Calu3 (cell line): ENCODE measurements at regions of chr11 and their contacts with region 1.

Region 1: GRCh38 chr11:77198440-77198849 is 70.4 kb downstream of the MYO7A start:
- DNase-seq: peak; percentile 34
- H3K4me3 Mint-ChIP-seq: no peak overlapping the region
- H3K27ac Mint-ChIP-seq: no peak overlapping the region
- H3K4me1 Mint-ChIP-seq: no peaks in the 10 kb centered on the region
- H3K27me3 Mint-ChIP-seq: no peaks in the 10 kb centered on the region
- CTCF ChIP-seq: no peak

Region 2: GRCh38 chr11:77140231-77140851 is 58.1 kb before region 1 on chr11:
- CTCF ChIA-PET with region 1: no interaction called
- intact Hi-C with region 1: no loop called
- DNase-seq: no peak
- H3K4me3 Mint-ChIP-seq: no peak overlapping the region
- H3K27ac Mint-ChIP-seq: no peak overlapping the region
- H3K4me1 Mint-ChIP-seq: peaks cover 19% of the 10 kb centered on the region
- H3K27me3 Mint-ChIP-seq: peaks cover 24% of the 10 kb centered on the region
- CTCF ChIP-seq: no peak

Region 3: GRCh38 chr11:77309401-77310085 is 111.1 kb after region 1 on chr11:
- CTCF ChIA-PET with region 1: no interaction called
- intact Hi-C with region 1: no loop called
- DNase-seq: no peak
- H3K4me3 Mint-ChIP-seq: no peak overlapping the region
- H3K27ac Mint-ChIP-seq: no peak overlapping the region
- H3K4me1 Mint-ChIP-seq: no peaks in the 10 kb centered on the region
- H3K27me3 Mint-ChIP-seq: no peaks in the 10 kb centered on the region
- CTCF ChIP-seq: no peak

Region 4: GRCh38 chr11:77370226-77370625 is 171.8 kb after region 1 on chr11:
- CTCF ChIA-PET with region 1: no interaction called
- intact Hi-C with region 1: loop called (anchors 5 kb)
- DNase-seq: no peak
- H3K4me3 Mint-ChIP-seq: no peak overlapping the region
- H3K27ac Mint-ChIP-seq: no peak overlapping the region
- H3K4me1 Mint-ChIP-seq: peaks cover 5% of the 10 kb centered on the region
- H3K27me3 Mint-ChIP-seq: no peaks in the 10 kb centered on the region
- CTCF ChIP-seq: no peak

Region 5: GRCh38 chr11:77421041-77421723 is 222.7 kb after region 1 on chr11:
- CTCF ChIA-PET with region 1: no interaction called
- intact Hi-C with region 1: no loop called
- DNase-seq: no peak
- H3K4me3 Mint-ChIP-seq: no peak overlapping the region
- H3K27ac Mint-ChIP-seq: no peak overlapping the region
- H3K4me1 Mint-ChIP-seq: peaks cover 36% of the 10 kb centered on the region
- H3K27me3 Mint-ChIP-seq: no peaks in the 10 kb centered on the region
- CTCF ChIP-seq: no peak